CD4-positive, alpha-beta memory T cell (primary cell): ENCODE measurements at regions of chr2 and their contacts with region 1.

Region 1: DNA sequence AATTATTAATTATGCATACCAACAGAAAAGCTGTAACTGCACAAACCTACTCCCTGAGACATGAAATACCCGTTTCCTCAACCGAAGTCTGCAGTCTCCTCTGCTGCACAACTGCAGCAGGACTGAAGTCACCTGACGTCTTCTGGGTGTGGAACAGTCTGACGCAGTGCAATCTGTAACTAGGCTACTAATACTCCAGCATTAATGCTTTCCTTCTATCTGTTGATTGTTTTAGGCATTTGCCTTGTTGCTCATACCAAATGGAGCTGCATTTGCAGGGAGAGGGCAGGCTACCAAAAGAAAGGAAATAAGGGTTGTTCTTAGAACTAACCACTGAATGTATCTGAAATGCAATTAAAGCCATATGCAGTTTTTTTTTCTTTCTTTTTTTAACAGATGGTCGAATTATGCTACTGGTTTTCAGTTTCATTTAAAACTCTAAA is 40.1 kb downstream of the RTN4 start:
- DNase-seq: peak; percentile 50 to 82 (median 71)
- H3K4me3 ChIP-seq: peak overlapping the region; percentile 9 to 44
- H3K4me3 Mint-ChIP-seq: peak overlapping the region; percentile 83 to 97 (median 93)
- H3K27ac ChIP-seq: peak overlapping the region; percentile 44
- H3K27ac Mint-ChIP-seq: peak overlapping the region; percentile 80 to 98 (median 94)
- H3K4me1 ChIP-seq: peaks cover 80% of the 10 kb centered on the region
- H3K4me1 Mint-ChIP-seq: peaks cover 45 to 73% (median 60%) of the 10 kb centered on the region in 4 donors
- H3K27me3 ChIP-seq: no peaks in the 10 kb centered on the region
- H3K27me3 Mint-ChIP-seq: no peaks in the 10 kb centered on the region

Region 2: DNA sequence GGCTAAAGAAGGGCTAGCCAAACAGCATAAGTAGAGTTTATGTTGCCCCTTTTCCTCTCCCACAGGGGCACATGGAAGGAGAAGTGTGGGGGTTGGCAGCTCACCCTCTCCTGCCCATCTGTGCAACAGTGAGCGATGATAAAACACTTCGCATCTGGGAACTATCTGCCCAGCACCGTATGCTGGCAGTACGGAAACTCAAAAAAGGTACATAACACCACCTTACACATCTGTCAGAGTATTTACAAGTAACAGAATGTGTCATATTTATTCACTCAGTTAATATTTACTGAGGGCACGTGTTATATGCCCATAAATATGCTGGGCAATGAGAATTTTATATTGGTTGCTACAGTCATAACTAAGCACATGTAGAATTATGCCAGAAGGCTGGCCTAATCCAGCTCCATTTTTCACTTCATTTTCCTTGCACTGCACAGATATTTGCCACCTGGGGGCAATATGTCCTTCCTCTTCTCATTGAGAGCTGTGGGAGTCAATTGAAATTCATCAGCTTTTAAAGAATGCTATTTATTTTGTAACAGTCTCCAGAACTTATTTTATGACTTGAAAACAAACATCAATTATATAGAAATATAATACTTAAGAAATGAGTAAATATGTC is 110.5 kb before region 1 on chr2:
- CTCF ChIA-PET with region 1: interaction called, 26 read pairs
- POLR2A ChIA-PET with region 1: interaction called, 8 read pairs
- intact Hi-C with region 1: loop called (anchors 5 kb)
- DNase-seq: peak in 4 of 5 donors; percentile 11 to 25 (median 16)
- H3K4me3 ChIP-seq: no peak overlapping the region
- H3K4me3 Mint-ChIP-seq: no peak overlapping the region
- H3K27ac ChIP-seq: no peak overlapping the region
- H3K27ac Mint-ChIP-seq: no peak overlapping the region
- H3K4me1 ChIP-seq: peaks cover 27% of the 10 kb centered on the region
- H3K4me1 Mint-ChIP-seq: peaks cover 20 to 26% (median 23%) of the 10 kb centered on the region in 4 donors
- H3K27me3 ChIP-seq: no peaks in the 10 kb centered on the region
- H3K27me3 Mint-ChIP-seq: no peaks in the 10 kb centered on the region

Region 3: GRCh38 chr2:54997826-54998225 is 12.3 kb before region 1 on chr2:
- CTCF ChIA-PET with region 1: interaction called, 6 read pairs
- POLR2A ChIA-PET with region 1: no interaction called
- intact Hi-C with region 1: loop called (anchors 1 kb)
- DNase-seq: no peak
- H3K4me3 ChIP-seq: no peak overlapping the region
- H3K4me3 Mint-ChIP-seq: peak overlapping the region in 1 of 8 donors; percentile 5
- H3K27ac ChIP-seq: no peak overlapping the region
- H3K27ac Mint-ChIP-seq: no peak overlapping the region
- H3K4me1 ChIP-seq: peaks cover 72% of the 10 kb centered on the region
- H3K4me1 Mint-ChIP-seq: peaks cover 56 to 79% (median 68%) of the 10 kb centered on the region in 4 donors
- H3K27me3 ChIP-seq: no peaks in the 10 kb centered on the region
- H3K27me3 Mint-ChIP-seq: no peaks in the 10 kb centered on the region

Region 4: DNA sequence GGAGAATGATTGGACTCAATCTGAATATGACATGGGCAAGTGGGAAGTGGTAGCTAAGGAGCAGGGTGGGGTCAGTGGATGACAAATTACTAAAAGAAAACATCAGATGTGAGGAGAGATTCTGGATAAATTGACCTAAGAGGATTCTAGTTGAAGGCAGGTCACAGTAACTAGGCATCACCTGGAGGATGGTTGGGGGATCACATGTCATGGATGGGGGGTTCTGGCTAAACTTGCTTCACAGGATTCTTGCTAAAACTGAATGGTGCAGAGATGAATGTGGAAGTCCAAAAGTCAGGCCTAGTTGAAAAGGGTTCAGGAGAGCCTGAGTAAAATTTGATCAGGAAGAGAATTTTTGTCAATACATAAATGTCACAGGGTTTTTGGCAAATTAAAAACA is 203.7 kb after region 1 on chr2:
- CTCF ChIA-PET with region 1: no interaction called
- POLR2A ChIA-PET with region 1: no interaction called
- intact Hi-C with region 1: no loop called
- DNase-seq: no peak
- H3K4me3 ChIP-seq: no peak overlapping the region
- H3K4me3 Mint-ChIP-seq: no peak overlapping the region
- H3K27ac ChIP-seq: no peak overlapping the region
- H3K27ac Mint-ChIP-seq: peak overlapping the region in 1 of 7 donors; percentile 64
- H3K4me1 ChIP-seq: no peaks in the 10 kb centered on the region
- H3K4me1 Mint-ChIP-seq: no peaks in the 10 kb centered on the region
- H3K27me3 ChIP-seq: no peaks in the 10 kb centered on the region
- H3K27me3 Mint-ChIP-seq: no peaks in the 10 kb centered on the region

Region 5: GRCh38 chr2:55247025-55247424 is 236.9 kb after region 1 on chr2:
- CTCF ChIA-PET with region 1: no interaction called
- POLR2A ChIA-PET with region 1: no interaction called
- intact Hi-C with region 1: no loop called
- DNase-seq: no peak
- H3K4me3 ChIP-seq: no peak overlapping the region
- H3K4me3 Mint-ChIP-seq: no peak overlapping the region
- H3K27ac ChIP-seq: no peak overlapping the region
- H3K27ac Mint-ChIP-seq: peak overlapping the region in 2 of 7 donors; percentile 3 to 23
- H3K4me1 ChIP-seq: no peaks in the 10 kb centered on the region
- H3K4me1 Mint-ChIP-seq: peaks cover 0 to 1% (median 0%) of the 10 kb centered on the region in 4 donors
- H3K27me3 ChIP-seq: no peaks in the 10 kb centered on the region
- H3K27me3 Mint-ChIP-seq: no peaks in the 10 kb centered on the region